ENCODE measurements at regions of chr5 and their contacts with region 1.

Region 1: DNA sequence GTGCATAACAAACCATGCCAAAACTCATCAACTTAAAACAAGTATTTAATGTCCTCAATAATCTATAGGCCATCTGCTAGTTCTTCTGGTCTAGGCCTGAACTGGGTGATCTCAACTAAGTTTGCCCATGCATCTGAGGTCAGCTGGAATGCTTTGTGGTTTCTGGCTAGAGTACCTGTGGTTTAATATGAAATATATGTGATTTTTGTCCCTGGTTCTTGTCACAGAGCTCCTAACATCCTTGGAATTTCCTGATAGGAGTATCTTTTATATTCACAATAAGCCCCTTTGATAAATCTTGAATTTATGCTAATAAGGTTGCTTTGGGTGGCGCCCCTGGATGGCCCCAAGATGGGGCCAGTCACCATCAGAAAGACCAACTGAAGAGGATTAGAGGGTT is 535.9 kb downstream of the DNAH5 start:
- DNase-seq: no peak
- H3K4me3 ChIP-seq: no peak overlapping the region
- H3K27ac ChIP-seq: no peak overlapping the region
- H3K4me1 ChIP-seq: no peaks in the 10 kb centered on the region
- H3K27me3 ChIP-seq: no peaks in the 10 kb centered on the region
- CTCF ChIP-seq: no peak

Region 2: GRCh38 chr5:13348568-13348967 is 60.0 kb before region 1 on chr5:
- intact Hi-C with region 1: loop called (anchors 2 kb)
- DNase-seq: no peak
- H3K4me3 ChIP-seq: no peak overlapping the region
- H3K27ac ChIP-seq: no peak overlapping the region
- H3K4me1 ChIP-seq: no peaks in the 10 kb centered on the region
- H3K27me3 ChIP-seq: no peaks in the 10 kb centered on the region
- CTCF ChIP-seq: no peak